Activated CD4-positive, alpha-beta memory T cell treated with anti-CD3 and anti-CD28 coated beads for 36 hours (primary cell): ENCODE measurements at regions of chr7 and their contacts with region 1.

Region 1: DNA sequence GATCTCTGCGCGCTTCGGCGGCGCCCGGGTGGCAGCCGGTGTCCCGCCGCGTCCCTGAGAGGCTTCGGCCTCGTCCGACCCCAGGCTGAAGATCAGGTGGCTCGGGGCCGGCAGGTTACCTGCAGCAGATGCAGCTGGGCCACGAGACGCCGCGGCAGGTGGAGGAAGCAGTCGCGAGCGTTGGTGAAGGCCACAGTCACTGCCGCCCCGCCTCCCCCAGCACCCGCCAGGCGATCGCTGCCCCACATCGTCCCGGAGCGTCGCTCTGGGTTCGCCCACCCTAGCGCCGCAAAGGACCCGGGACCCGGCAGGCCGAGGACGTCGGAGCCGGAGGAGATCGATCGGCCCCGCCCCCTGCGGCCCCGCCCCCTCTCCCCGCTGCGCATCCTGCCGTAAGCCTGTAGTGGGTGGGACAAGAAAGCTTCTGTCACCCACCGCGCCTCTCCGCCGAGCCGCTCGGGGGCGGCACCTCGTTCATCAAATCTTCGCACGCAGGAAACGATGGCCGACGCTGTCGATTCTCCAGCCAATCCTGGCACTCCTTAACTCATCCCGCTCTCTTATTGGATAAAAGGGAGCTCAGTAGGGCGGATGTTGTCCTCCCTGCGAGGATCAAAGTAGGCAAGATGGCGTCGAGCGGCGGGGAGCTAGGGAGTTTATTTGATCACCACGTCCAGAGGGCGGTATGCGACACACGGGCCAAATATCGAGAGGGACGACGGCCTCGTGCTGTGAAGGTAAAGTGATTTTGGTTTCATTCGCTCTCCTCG is at the starts of genes PEX1 and RBM48:
- DNase-seq: peak; percentile 98
- H3K4me3 Mint-ChIP-seq: peak within 1 kb of the TSS; percentile 90
- H3K27ac Mint-ChIP-seq: peak within 1 kb of the TSS; percentile 89
- H3K4me1 Mint-ChIP-seq: peaks cover 23% of the 10 kb centered on the region
- H3K27me3 Mint-ChIP-seq: peaks cover 2% of the 10 kb centered on the region
- total RNA-seq, gene PEX1: 16.9 to 17.0 TPM
- total RNA-seq, gene RBM48: 11.7 to 14.0 TPM

Region 2: DNA sequence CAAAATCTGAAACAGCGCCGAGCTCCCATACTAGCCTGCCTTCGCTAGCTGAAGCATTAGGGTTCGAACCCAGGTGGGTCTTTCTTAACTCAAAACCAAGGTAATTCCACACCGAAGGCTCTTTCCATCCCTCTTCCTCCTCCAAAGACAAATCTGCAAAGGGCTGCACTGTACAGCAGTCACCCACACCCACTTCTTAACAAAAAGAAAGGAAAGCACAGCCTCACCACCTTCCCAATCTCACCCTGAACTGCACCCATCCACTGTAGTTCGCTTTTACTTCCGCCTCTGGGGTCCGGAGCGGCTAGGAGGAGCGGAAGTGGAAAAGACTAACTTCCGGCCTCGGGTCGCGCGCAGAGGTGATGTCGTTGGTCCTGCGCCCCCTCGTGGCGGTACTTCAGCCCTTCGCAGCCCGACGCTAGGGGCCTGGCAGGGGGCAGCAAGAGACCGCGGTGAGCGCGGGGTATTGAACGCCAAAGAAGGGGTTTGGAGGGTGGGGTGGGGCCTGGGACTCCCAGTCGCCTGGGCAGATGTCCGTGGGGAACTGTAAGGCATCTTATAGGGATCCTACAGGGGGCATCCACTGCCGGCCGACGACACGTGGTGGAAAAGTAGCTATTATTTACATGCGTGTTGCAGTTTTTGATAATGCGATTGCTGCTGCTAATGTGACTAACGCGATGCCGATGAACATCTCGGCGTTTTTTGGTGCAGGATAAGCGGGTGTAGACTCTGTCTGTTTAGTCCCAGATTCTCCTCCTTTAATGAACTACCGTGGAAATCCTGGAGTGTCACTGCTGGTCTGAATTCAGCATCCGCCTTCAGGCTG is 647.7 kb before region 1 on chr7 and contains the start of gene MTERF1:
- CTCF ChIA-PET with region 1: no interaction called
- POLR2A ChIA-PET with region 1: no interaction called
- intact Hi-C with region 1: loop called (anchors 1 kb)
- DNase-seq: peak; percentile 95
- H3K4me3 Mint-ChIP-seq: peak within 1 kb of the TSS; percentile 96
- H3K27ac Mint-ChIP-seq: peak within 1 kb of the TSS; percentile 83
- H3K4me1 Mint-ChIP-seq: peaks cover 27% of the 10 kb centered on the region
- H3K27me3 Mint-ChIP-seq: no peaks in the 10 kb centered on the region
- total RNA-seq, gene MTERF1: 14.1 to 14.2 TPM

Region 3: DNA sequence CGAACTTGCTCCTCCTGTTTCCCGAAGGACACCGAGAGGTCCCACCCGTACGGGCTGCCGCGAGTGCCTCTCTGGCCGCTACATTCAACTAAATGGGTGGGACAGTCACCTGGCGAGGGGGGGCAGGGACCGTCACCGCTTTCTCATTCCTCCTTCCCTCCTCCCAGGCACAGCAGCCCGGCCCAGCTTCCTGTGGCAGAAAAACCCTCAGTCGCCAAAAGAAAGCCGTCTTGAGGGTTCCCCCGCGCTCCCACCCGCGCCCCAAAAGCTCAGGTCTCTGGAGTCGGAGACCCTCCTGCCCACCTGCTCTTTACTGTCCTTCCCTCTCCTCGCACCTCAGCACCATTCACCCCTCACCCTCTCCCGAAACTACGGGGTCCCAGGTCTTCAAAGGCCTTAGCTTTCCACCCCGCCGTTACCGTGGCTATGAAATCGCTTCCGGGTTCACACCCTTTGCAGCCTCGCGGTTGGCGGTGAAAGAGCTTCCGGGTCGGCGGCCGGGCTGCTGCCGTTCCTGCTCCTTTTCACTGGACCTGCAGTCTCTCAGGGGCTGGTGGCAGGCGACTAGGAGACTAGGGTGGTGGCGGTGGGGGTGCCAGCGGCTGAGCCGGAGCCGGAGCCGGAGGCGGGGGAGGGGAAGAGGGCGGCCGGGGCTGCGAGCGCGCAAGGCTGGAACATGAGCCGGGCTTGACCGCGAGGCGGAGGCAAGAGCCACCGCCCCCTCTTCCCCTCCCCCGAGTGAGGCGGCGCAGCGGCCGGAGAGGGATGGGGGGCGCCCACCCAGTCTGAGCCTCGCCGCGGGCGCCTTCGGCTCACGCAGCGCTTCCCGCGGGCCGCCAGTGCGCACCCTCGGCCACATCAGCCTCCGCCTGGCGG is 282.6 kb before region 1 on chr7 and contains the starts of genes ANKIB1 and KRIT1:
- CTCF ChIA-PET with region 1: interaction called, 3 read pairs
- POLR2A ChIA-PET with region 1: interaction called, 9 read pairs
- intact Hi-C with region 1: loop called (anchors 1 kb)
- DNase-seq: peak; percentile 92
- H3K4me3 Mint-ChIP-seq: peak within 1 kb of the TSS; percentile 99
- H3K27ac Mint-ChIP-seq: peak within 1 kb of the TSS; percentile 100
- H3K4me1 Mint-ChIP-seq: peaks cover 29% of the 10 kb centered on the region
- H3K27me3 Mint-ChIP-seq: no peaks in the 10 kb centered on the region
- total RNA-seq, gene ANKIB1: 34.8 to 39.9 TPM
- total RNA-seq, gene KRIT1: 29.2 to 29.3 TPM

Region 4: DNA sequence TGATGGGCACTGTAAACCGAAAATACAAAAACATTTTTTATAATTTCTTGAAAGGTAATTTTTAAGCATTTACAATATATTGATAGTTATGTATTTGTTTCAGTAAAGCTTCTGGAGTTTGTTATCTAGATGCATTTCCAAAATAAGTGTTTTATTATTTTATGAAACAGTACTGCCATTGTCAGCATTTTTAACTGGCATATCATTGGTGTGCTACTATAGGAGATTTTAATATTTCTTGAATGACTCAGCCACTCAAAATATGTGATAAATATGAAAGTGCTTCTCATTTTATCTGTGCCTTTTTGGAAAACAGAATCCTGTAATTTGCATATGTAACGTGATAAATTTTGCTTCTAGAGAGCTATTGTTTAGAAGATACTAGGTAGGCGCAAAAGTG is 184.7 kb before region 1 on chr7:
- CTCF ChIA-PET with region 1: no interaction called
- POLR2A ChIA-PET with region 1: no interaction called
- intact Hi-C with region 1: no loop called
- DNase-seq: no peak
- H3K4me3 Mint-ChIP-seq: no peak overlapping the region
- H3K27ac Mint-ChIP-seq: no peak overlapping the region
- H3K4me1 Mint-ChIP-seq: no peaks in the 10 kb centered on the region
- H3K27me3 Mint-ChIP-seq: no peaks in the 10 kb centered on the region

Region 5: GRCh38 chr7:92590711-92591310 is 62.4 kb after region 1 on chr7:
- CTCF ChIA-PET with region 1: interaction called, 19 read pairs
- POLR2A ChIA-PET with region 1: interaction called, 9 read pairs
- intact Hi-C with region 1: loop called (anchors 1 kb)
- DNase-seq: no peak
- H3K4me3 Mint-ChIP-seq: peak overlapping the region; percentile 48
- H3K27ac Mint-ChIP-seq: no peak overlapping the region
- H3K4me1 Mint-ChIP-seq: peaks cover 42% of the 10 kb centered on the region
- H3K27me3 Mint-ChIP-seq: no peaks in the 10 kb centered on the region

Region 6: GRCh38 chr7:92833024-92833765 is 304.8 kb after region 1 on chr7:
- CTCF ChIA-PET with region 1: interaction called, 6 read pairs
- POLR2A ChIA-PET with region 1: interaction called, 6 read pairs
- intact Hi-C with region 1: loop called (anchors 2 kb)
- DNase-seq: peak; percentile 94
- H3K4me3 Mint-ChIP-seq: peak overlapping the region; percentile 97
- H3K27ac Mint-ChIP-seq: peak overlapping the region; percentile 98
- H3K4me1 Mint-ChIP-seq: peaks cover 43% of the 10 kb centered on the region
- H3K27me3 Mint-ChIP-seq: no peaks in the 10 kb centered on the region

Region 7: DNA sequence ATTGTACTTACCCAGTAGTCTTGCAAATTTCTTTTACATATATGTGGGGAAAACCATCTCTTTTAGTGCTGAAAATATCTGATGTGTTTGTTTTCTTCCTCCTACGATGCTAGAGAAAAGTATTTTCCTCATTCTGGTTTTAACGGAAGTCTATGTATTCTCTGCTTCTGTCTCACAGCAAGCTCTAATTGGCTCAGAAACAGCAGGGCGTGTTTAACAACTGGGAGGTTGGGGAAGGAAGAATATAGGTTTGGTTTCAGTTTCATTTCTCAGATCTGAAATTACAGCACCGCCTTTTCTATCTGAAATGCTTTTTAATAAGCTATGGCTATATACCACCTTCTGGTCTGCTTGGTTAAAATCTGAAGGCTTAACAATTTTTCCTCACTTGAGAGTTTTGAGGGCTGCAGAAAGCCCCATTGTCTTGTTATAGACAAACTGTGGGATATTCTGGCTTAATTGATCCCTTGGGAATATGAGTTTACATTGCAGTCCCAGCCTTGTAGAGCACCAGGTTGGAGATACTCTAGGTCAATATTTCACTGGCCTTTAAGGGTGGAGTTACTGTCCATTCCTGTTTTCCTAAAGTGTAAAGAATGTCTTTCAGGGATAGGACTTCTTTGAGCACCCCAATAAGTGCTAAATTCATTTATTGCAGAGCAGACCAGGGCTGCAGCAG is 589.6 kb after region 1 on chr7 and contains the start of gene SAMD9:
- CTCF ChIA-PET with region 1: no interaction called
- POLR2A ChIA-PET with region 1: no interaction called
- intact Hi-C with region 1: loop called (anchors 1 kb)
- DNase-seq: peak; percentile 55
- H3K4me3 Mint-ChIP-seq: peak within 1 kb of the TSS; percentile 69
- H3K27ac Mint-ChIP-seq: peak within 1 kb of the TSS; percentile 69
- H3K4me1 Mint-ChIP-seq: peaks cover 50% of the 10 kb centered on the region
- H3K27me3 Mint-ChIP-seq: no peaks in the 10 kb centered on the region
- total RNA-seq, gene SAMD9: 6.9 to 7.2 TPM